Activated CD4-positive, alpha-beta T cell treated with anti-CD3 and anti-CD28 coated beads, Interleukin-2, amount 10 ng/mL, durations not matched to agents 24 days and 14 days (primary cell): ENCODE measurements at regions of chr6 and their contacts with region 1.

Region 1: DNA sequence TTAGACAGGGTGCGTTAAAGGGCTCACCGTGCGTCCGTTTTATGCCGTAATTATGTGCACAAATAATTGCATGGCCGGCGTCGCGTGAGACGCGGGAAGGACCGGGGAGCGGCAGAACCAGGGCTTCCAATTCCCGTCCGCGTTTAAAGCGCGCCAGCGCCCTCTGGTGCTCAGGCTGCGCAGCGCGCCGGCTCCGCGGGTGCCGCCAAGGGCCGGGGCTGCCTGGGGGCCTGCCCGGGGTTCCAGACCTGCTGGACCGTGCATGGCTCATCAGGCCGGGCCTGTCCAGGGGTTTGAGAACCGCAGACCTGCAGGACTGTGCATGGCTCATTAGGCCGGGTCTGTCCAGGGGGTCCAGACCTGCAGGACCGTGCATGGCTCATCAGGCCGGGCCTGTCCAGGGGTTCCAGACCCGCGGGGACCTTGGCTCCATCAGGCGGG is 369.0 kb downstream of the THBS2 start:
- DNase-seq: peak; percentile 95
- H3K4me3 Mint-ChIP-seq: peak overlapping the region; percentile 85
- H3K27ac Mint-ChIP-seq: no peak overlapping the region
- H3K4me1 Mint-ChIP-seq: peaks cover 9% of the 10 kb centered on the region
- H3K27me3 Mint-ChIP-seq: peaks cover 7% of the 10 kb centered on the region

Region 2: DNA sequence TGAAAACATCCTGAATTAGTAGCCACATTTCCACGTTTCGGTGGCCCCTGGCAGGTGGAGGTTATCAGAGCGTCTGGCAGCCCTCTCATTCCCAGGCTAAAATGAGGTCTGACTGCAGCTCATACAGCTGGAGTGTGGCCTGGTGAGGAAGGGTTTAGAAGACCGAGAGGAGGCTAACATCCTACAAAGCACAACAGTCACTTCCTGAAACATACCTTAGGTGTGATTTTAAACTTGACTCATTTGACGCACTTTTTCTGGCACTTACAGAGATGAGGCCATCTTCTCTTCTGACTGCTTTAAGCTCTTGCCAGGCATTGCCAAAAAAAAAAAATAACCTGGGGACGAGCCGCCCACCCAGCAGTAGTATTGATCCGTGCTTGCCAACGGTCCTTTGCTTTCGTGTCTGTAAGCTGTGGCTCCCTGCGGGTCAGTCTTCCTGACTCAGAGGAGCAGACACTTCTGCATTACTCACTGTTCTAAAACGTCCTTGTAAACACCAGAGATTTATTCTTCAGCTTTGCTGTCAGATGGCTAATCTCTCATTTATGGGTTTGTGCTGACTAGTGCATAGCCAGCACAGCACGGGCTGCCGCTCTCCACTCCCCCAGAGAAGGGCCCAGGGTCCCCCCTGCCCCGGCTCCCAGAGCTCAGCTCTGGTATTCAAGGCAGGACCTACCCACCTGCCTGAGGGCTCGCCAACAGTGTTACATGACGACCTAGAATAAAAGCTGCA is 727.2 kb before region 1 on chr6:
- intact Hi-C with region 1: loop called (anchors 10 kb)
- DNase-seq: no peak
- H3K4me3 Mint-ChIP-seq: no peak overlapping the region
- H3K27ac Mint-ChIP-seq: no peak overlapping the region
- H3K4me1 Mint-ChIP-seq: no peaks in the 10 kb centered on the region
- H3K27me3 Mint-ChIP-seq: peaks cover 2% of the 10 kb centered on the region

Region 3: GRCh38 chr6:168370310-168370991 is 514.2 kb before region 1 on chr6:
- intact Hi-C with region 1: loop called (anchors 1 kb)
- DNase-seq: peak; percentile 87
- H3K4me3 Mint-ChIP-seq: no peak overlapping the region
- H3K27ac Mint-ChIP-seq: no peak overlapping the region
- H3K4me1 Mint-ChIP-seq: peaks cover 2% of the 10 kb centered on the region
- H3K27me3 Mint-ChIP-seq: peaks cover 3% of the 10 kb centered on the region

Region 4: GRCh38 chr6:169763308-169763707 is 878.6 kb after region 1 on chr6:
- intact Hi-C with region 1: no loop called
- DNase-seq: peak; percentile 37
- H3K4me3 Mint-ChIP-seq: no peak overlapping the region
- H3K27ac Mint-ChIP-seq: no peak overlapping the region
- H3K4me1 Mint-ChIP-seq: peaks cover 2% of the 10 kb centered on the region
- H3K27me3 Mint-ChIP-seq: no peaks in the 10 kb centered on the region